B cell (primary cell): ENCODE measurements at regions of chr11 and their contacts with region 1.

Region 1: DNA sequence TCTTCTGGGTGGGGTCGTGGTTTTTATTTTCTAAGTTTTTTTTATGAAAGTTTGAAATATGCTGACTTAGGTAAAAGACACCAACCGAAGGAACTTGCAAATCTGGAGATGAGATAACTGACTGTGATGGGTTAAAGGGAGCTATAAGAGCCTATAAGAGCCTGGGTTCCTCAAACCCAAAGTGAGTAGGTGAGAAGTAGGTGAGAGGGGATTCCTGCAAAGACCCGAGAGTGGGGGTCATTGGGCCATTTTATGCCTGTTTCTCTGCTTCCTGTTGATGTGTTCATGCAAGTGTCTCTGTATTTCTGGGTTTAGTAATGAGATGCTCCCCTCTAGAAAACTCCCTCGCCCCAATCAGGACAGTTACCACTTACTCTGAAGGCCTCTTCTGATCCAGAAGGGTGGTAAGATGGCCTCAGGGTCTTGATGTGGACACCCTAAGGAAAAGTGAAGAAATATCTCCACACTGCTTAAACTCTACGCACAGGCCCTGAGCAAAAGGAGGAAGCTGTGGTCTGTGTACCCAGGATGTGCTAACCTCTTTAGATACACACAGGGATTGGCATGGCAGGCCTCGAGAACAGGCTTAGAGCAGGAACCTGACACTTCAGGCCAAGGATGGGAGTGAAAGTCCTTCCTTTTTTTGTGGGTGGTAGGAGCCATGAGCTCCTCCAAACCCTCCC is 1.8 kb downstream of the FLI1 start:
- DNase-seq: peak; percentile 81
- ATAC-seq: peak; percentile 53
- H3K4me3 ChIP-seq: peak overlapping the region; percentile 62 to 100 (median 94)
- H3K4me3 Mint-ChIP-seq: peak overlapping the region; percentile 94
- H3K27ac ChIP-seq: peak overlapping the region; percentile 61 to 92
- H3K27ac Mint-ChIP-seq: peak overlapping the region; percentile 95
- H3K4me1 ChIP-seq: peaks cover 55 to 62% of the 10 kb centered on the region in 2 donors
- H3K4me1 Mint-ChIP-seq: peaks cover 62% of the 10 kb centered on the region
- H3K27me3 ChIP-seq: peaks cover 0 to 12% (median 4%) of the 10 kb centered on the region in 4 experiments
- H3K27me3 Mint-ChIP-seq: no peaks in the 10 kb centered on the region
- CTCF ChIP-seq: no peak

Region 2: DNA sequence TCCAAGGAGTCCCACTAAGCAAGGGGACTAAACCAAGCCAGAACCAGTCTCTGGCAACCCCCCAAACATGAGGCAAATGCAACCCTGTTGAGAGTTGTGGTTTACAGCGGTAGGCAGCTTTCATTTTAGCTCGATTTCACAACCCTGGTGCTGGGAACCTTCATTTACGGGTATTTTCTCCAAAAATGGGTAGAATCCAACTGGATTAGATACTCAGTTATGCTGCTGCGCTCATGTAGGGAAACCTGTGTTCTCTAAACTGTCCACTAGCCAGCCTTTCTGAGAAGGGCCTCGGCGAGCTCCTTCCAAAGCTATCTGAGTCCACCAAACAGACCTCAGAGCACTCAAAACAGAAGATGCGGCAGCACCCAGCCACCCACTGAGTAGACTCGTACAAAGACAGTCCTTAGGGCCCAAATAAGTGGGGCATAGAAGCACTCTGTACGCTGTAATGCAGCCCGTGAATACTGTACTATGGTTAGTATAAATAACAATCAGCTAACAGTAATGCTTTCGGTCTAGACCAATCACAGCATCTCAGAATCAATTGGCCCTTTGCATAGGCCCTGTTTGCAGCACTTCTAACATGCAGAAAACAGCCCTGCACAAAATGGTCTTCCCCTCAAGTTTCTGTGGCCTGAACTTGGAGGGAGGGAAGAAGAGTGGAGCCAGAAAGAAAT is 213.0 kb before region 1 on chr11:
- CTCF ChIA-PET with region 1: no interaction called
- POLR2A ChIA-PET with region 1: no interaction called
- intact Hi-C with region 1: loop called (anchors 5 kb)
- DNase-seq: no peak
- ATAC-seq: peak; percentile 13
- H3K4me3 ChIP-seq: peak overlapping the region in 2 of 5 experiments; percentile 27 to 37
- H3K4me3 Mint-ChIP-seq: peak overlapping the region; percentile 61
- H3K27ac ChIP-seq: peak overlapping the region; percentile 77 to 90
- H3K27ac Mint-ChIP-seq: peak overlapping the region; percentile 95
- H3K4me1 ChIP-seq: peaks cover 82% of the 10 kb centered on the region in 2 donors
- H3K4me1 Mint-ChIP-seq: peaks cover 92% of the 10 kb centered on the region
- H3K27me3 ChIP-seq: no peaks in the 10 kb centered on the region
- H3K27me3 Mint-ChIP-seq: no peaks in the 10 kb centered on the region
- CTCF ChIP-seq: no peak

Region 3: DNA sequence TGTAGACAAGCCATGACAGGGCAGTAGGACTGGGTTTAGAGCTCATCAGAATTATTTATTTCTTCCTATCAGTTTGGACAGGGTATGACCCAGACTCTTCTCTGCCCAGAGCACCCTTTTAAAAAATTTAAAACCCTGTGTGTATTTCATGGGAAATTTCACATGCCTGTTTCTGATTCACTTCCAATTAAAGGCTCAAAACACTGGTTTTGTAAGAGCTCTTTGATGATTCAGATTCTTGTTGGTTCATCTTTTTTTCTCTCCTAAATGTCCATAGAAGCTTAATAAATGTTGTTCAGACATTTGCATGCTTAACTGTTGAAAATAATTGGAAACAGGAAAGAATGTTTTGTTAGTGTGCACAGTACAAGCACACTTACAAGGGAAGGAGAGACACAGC is 12.0 kb after region 1 on chr11:
- CTCF ChIA-PET with region 1: interaction called, 5 read pairs
- POLR2A ChIA-PET with region 1: interaction called, 4 read pairs
- intact Hi-C with region 1: loop called (anchors 1 kb)
- DNase-seq: no peak
- ATAC-seq: no peak
- H3K4me3 ChIP-seq: no peak overlapping the region
- H3K4me3 Mint-ChIP-seq: no peak overlapping the region
- H3K27ac ChIP-seq: peak overlapping the region in 1 of 2 donors; percentile 52
- H3K27ac Mint-ChIP-seq: peak overlapping the region; percentile 51
- H3K4me1 ChIP-seq: peaks cover 77 to 88% of the 10 kb centered on the region in 2 donors
- H3K4me1 Mint-ChIP-seq: peaks cover 92% of the 10 kb centered on the region
- H3K27me3 ChIP-seq: no peaks in the 10 kb centered on the region
- H3K27me3 Mint-ChIP-seq: no peaks in the 10 kb centered on the region
- CTCF ChIP-seq: no peak

Region 4: GRCh38 chr11:128720522-128720985 is 24.9 kb after region 1 on chr11:
- CTCF ChIA-PET with region 1: interaction called, 7 read pairs
- POLR2A ChIA-PET with region 1: interaction called, 16 read pairs
- intact Hi-C with region 1: loop called (anchors 1 kb)
- DNase-seq: peak; percentile 52
- ATAC-seq: peak; percentile 48
- H3K4me3 ChIP-seq: peak overlapping the region in 4 of 5 experiments; percentile 16 to 63 (median 42)
- H3K4me3 Mint-ChIP-seq: peak overlapping the region; percentile 88
- H3K27ac ChIP-seq: peak overlapping the region; percentile 56 to 88
- H3K27ac Mint-ChIP-seq: peak overlapping the region; percentile 98
- H3K4me1 ChIP-seq: peaks cover 100% of the 10 kb centered on the region in 2 donors
- H3K4me1 Mint-ChIP-seq: peaks cover 98% of the 10 kb centered on the region
- H3K27me3 ChIP-seq: no peaks in the 10 kb centered on the region
- H3K27me3 Mint-ChIP-seq: no peaks in the 10 kb centered on the region
- CTCF ChIP-seq: no peak

Region 5: DNA sequence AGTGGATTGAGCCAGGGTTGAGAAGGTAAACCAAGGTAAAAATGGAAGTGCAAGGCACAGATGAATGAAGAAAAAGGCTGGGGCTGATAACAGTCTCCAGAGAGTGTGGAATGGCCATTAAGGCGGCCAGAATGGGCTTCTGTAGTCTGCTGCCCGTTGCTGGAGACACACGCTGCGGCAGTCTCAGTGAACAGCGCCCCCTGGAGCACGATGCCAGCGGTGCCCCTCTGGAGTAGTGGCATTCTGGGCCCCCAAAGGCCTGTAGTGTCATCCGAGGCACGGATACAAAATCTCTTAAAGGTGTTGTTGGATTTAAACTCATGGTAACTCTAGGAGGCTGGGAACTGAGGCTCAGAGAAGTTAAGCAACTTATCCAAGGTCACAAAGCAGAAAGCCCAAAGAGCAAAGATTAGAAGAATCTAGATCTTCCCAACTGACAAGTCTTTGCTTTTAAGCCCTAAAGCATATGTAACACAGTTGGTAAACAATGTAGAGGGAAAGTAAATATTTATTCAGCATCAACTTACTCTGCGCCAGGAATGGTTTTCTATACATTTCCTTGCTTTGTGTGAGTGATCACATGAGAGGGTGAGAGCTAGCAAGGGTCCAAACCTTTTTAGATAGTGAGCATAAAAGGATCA is 153.3 kb after region 1 on chr11:
- CTCF ChIA-PET with region 1: no interaction called
- POLR2A ChIA-PET with region 1: no interaction called
- intact Hi-C with region 1: loop called (anchors 10 kb)
- DNase-seq: peak; percentile 77
- ATAC-seq: peak; percentile 72
- H3K4me3 ChIP-seq: no peak overlapping the region
- H3K4me3 Mint-ChIP-seq: no peak overlapping the region
- H3K27ac ChIP-seq: no peak overlapping the region
- H3K27ac Mint-ChIP-seq: peak overlapping the region; percentile 65
- H3K4me1 ChIP-seq: peaks cover 45 to 60% of the 10 kb centered on the region in 2 donors
- H3K4me1 Mint-ChIP-seq: peaks cover 52% of the 10 kb centered on the region
- H3K27me3 ChIP-seq: no peaks in the 10 kb centered on the region
- H3K27me3 Mint-ChIP-seq: no peaks in the 10 kb centered on the region
- CTCF ChIP-seq: peak; percentile 91